ENCODE measurements at regions of chr7 and their contacts with region 1.

Region 1: GRCh38 chr7:85186521-85187241 is at the start of gene SEMA3D:
- DNase-seq: peak; percentile 86
- H3K4me3 ChIP-seq: peak within 1 kb of the TSS; percentile 82 to 88 (median 85)
- H3K27ac ChIP-seq: no peak within 1 kb of the TSS
- H3K4me1 ChIP-seq: peaks cover 11% of the 10 kb centered on the region
- H3K27me3 ChIP-seq: no peaks in the 10 kb centered on the region
- CTCF ChIP-seq: peak; percentile 80 to 88
- total RNA-seq, gene SEMA3D: 3.5 to 9.5 TPM

Region 2: GRCh38 chr7:85041605-85042216 is 145.0 kb before region 1 on chr7:
- CTCF ChIA-PET with region 1: interaction called, 3 read pairs
- dilution Hi-C with region 1: no loop called
- in situ Hi-C with region 1: loop called (anchors 5 kb)
- intact Hi-C with region 1: loop called (anchors 1 kb)
- DNase-seq: peak; percentile 58
- H3K4me3 ChIP-seq: no peak overlapping the region
- H3K27ac ChIP-seq: no peak overlapping the region
- H3K4me1 ChIP-seq: no peaks in the 10 kb centered on the region
- H3K27me3 ChIP-seq: no peaks in the 10 kb centered on the region
- CTCF ChIP-seq: peak; percentile 72 to 85

Region 3: DNA sequence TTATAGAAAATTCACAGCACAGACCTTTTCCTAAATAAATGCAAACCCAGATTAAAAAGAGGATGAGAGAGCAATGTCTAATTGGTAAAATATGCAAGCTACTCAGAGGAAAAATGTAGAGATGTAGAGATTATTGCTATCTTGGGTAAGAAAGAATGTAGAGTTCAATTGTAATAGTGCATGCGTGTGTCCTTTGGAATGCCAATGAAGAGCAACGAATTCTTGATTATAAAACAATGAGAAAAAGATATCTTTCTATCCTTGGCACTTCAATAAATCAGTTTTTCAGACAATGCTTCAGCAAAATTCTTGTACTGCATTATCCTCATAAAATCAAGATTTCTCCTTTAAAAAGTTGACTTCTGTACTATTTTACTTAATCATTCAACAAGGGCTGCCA is 50.7 kb before region 1 on chr7:
- CTCF ChIA-PET with region 1: no interaction called
- dilution Hi-C with region 1: no loop called
- in situ Hi-C with region 1: no loop called
- intact Hi-C with region 1: loop called (anchors 2 kb)
- DNase-seq: peak; percentile 53
- H3K4me3 ChIP-seq: peak overlapping the region in 1 of 3 experiments; percentile 7
- H3K27ac ChIP-seq: peak overlapping the region; percentile 40
- H3K4me1 ChIP-seq: peaks cover 9% of the 10 kb centered on the region
- H3K27me3 ChIP-seq: no peaks in the 10 kb centered on the region
- CTCF ChIP-seq: no peak

Region 4: GRCh38 chr7:85554236-85555178 is 367.8 kb after region 1 on chr7:
- CTCF ChIA-PET with region 1: no interaction called
- dilution Hi-C with region 1: no loop called
- in situ Hi-C with region 1: no loop called
- intact Hi-C with region 1: loop called (anchors 2 kb)
- DNase-seq: peak; percentile 55
- H3K4me3 ChIP-seq: no peak overlapping the region
- H3K27ac ChIP-seq: no peak overlapping the region
- H3K4me1 ChIP-seq: no peaks in the 10 kb centered on the region
- H3K27me3 ChIP-seq: peaks cover 1% of the 10 kb centered on the region
- CTCF ChIP-seq: peak; percentile 55 to 71

Region 5: GRCh38 chr7:85829817-85830432 is 643.2 kb after region 1 on chr7:
- CTCF ChIA-PET with region 1: no interaction called
- dilution Hi-C with region 1: no loop called
- in situ Hi-C with region 1: no loop called
- intact Hi-C with region 1: loop called (anchors 5 kb)
- DNase-seq: no peak
- H3K4me3 ChIP-seq: no peak overlapping the region
- H3K27ac ChIP-seq: no peak overlapping the region
- H3K4me1 ChIP-seq: no peaks in the 10 kb centered on the region
- H3K27me3 ChIP-seq: no peaks in the 10 kb centered on the region
- CTCF ChIP-seq: peak; percentile 14 to 42